A549 (cell line): ENCODE measurements at regions of chr16 and their contacts with region 1.

Region 1: GRCh38 chr16:79601931-79602627 is 1.5 kb upstream of the MAF start:
- DNase-seq: peak; percentile 45 to 70
- ATAC-seq: peak in 1 of 2 experiments; percentile 53; a peak in 3 of 6 replicates
- H3K4me3 ChIP-seq: peak overlapping the region; percentile 49; the same call in 2 of the 3 replicates
- H3K27ac ChIP-seq: no peak overlapping the region
- H3K4me1 ChIP-seq: peaks cover 13% of the 10 kb centered on the region; the same call in 2 of the 3 replicates
- CTCF ChIP-seq: peak; percentile 84
- EP300 ChIP-seq: no peak
- POLR2A ChIP-seq: no peak
- RAD21 ChIP-seq: peak; percentile 74 to 79

Region 2: DNA sequence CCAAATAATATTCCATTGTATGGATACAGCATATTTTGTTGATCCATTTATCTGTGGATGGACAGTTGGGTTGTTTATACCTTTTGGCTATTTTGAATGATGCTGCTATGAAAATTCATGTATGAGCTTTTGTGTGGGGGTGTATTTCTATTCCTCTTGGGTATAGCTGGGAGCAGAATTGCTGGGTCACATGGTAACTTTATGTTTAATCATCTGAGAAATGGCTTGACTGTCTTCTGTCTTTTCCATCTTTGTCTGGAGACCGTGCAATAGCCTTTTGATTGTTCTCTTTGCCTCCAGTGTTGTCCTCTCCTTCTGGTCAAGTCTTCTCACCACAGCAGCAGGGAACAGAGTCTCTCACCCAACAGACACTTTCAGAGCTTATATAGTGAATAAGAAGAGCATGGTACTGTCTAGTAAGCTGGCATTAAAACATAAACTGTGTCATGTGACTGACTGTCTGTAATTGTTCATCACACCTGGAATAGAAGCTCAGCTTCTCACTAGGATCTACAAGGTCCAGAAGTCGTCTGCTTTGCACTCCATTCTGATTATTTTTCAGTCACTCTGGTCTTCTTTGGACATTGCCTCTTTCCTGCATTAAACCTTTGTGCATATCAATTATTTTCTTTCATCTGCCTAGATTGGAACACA is 19.1 kb after region 1 on chr16:
- CTCF ChIA-PET with region 1: interaction called, 13 read pairs
- POLR2A ChIA-PET with region 1: no interaction called
- DNase-seq: no peak
- ATAC-seq: no peak
- H3K4me3 ChIP-seq: no peak overlapping the region
- H3K27ac ChIP-seq: no peak overlapping the region
- H3K4me1 ChIP-seq: no peaks in the 10 kb centered on the region
- CTCF ChIP-seq: no peak
- EP300 ChIP-seq: no peak
- POLR2A ChIP-seq: no peak
- RAD21 ChIP-seq: no peak

Region 3: GRCh38 chr16:79640513-79641355 is 38.7 kb after region 1 on chr16:
- CTCF ChIA-PET with region 1: interaction called, 10 read pairs
- POLR2A ChIA-PET with region 1: no interaction called
- DNase-seq: no peak
- ATAC-seq: peak; percentile 18 to 49; a peak in 2 of 6 replicates
- H3K4me3 ChIP-seq: no peak overlapping the region
- H3K27ac ChIP-seq: peak overlapping the region; percentile 9 to 61; a peak in 3 of 6 replicates
- H3K4me1 ChIP-seq: peaks cover 13% of the 10 kb centered on the region
- CTCF ChIP-seq: no peak
- EP300 ChIP-seq: no peak
- POLR2A ChIP-seq: no peak
- RAD21 ChIP-seq: no peak

Region 4: DNA sequence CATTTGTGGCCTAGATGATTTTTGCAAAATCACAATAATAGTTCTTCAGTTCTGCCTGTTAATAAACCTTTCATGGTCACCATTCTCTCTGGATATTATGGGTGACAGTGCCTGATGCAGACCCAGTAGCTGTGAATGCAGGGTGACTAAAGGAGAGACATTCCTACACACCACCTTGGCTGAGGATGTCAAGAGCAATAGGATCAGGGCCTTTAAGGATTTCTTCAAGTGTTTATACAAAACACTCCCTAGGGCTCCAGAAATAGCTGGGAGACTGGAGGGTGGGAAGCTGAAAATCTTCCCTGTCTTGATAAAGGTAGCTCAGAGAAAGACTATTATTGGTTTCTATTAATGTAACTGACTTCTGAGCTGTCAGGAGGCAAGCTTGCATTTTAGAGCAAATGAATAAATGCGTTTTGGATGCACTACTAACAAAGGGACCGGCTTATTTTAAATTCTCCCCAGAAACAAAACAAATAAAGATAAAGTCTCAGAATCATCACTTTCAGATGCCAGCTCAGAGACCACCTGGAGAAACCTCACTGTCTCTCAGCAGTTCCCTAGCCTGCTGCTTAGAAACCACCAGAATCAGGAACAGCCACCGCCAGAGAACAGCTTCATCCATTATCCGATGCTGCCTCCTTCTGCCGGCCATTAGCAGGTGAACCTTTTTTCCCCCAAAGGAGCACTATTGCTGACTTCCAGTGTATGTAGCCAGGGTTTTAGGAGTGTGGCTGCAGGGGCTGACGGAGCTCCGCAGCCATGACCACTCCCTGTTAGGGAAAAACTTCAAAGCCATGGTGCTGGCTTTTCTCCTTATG is 767.3 kb after region 1 on chr16:
- CTCF ChIA-PET with region 1: interaction called, 11 read pairs
- POLR2A ChIA-PET with region 1: no interaction called
- DNase-seq: peak; percentile 31 to 59
- ATAC-seq: peak; percentile 91 to 96
- H3K4me3 ChIP-seq: no peak overlapping the region
- H3K27ac ChIP-seq: no peak overlapping the region
- H3K4me1 ChIP-seq: no peaks in the 10 kb centered on the region
- CTCF ChIP-seq: peak; percentile 63
- EP300 ChIP-seq: no peak
- POLR2A ChIP-seq: no peak
- RAD21 ChIP-seq: peak; percentile 90 to 91